Naive thymus-derived CD4-positive, alpha-beta T cell (primary cell): ENCODE measurements at regions of chr10 and their contacts with region 1.

Region 1: GRCh38 chr10:96395931-96396877 is 37.4 kb upstream of the OPALIN start:
- DNase-seq: peak; percentile 35 to 67 (median 56)
- ATAC-seq: peak; percentile 89
- H3K4me3 ChIP-seq: peak overlapping the region; percentile 28
- H3K4me3 Mint-ChIP-seq: peak overlapping the region in 7 of 10 donors; percentile 6 to 80 (median 66)
- H3K27ac ChIP-seq: no peak overlapping the region
- H3K27ac Mint-ChIP-seq: no peak overlapping the region
- H3K4me1 ChIP-seq: no peaks in the 10 kb centered on the region
- H3K4me1 Mint-ChIP-seq: peaks cover 0 to 5% (median 0%) of the 10 kb centered on the region in 7 donors
- H3K27me3 ChIP-seq: no peaks in the 10 kb centered on the region
- H3K27me3 Mint-ChIP-seq: peaks cover 7 to 52% (median 16%) of the 10 kb centered on the region in 5 donors

Region 2: DNA sequence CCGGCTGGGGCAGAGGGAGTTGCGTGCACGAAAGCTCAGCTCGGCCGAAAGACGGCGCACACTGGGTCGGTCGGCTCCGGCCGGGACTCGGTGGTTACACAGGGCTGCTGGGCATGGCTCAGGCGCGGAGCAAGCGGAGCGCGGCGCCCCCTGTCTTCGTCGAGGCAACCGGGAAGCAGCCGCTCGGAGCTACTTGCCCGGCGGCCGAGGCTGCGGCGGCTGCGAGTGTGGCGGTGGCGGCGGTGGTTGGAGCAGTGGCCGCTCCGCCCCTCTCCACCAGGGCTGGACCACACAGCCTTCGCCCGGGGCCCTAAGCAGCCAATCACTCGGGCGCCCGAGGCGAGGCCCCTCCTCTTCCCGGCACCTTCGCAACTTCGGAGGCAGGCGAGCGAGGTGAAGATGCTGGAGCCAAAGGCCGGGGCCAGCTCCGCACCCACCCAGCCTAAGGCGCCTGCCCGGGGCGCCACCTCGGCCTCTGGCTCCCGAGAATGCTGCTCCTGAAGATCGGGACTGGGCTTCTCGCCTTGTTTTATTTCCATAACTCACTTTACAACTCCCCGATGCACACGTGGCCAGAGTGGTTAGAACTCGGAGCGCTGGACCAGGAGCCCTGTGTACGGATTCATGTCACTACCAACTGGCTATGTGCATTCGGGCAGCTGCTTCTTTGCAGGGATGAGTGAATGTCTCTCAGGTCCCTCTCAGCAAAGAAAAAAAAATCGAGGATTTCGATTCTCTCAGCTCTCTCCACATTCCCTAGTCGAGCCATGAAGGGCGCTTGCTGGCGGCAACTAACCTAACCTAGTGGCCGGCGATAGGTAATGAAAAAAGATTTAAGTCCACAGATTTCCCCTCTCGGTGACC is 117.7 kb after region 1 on chr10 and contains the start of gene TLL2:
- CTCF ChIA-PET with region 1: no interaction called
- POLR2A ChIA-PET with region 1: no interaction called
- intact Hi-C with region 1: loop called (anchors 1 to 2 kb)
- DNase-seq: peak; percentile 1 to 74 (median 33)
- ATAC-seq: peak; percentile 83
- H3K4me3 ChIP-seq: peak within 1 kb of the TSS; percentile 48
- H3K4me3 Mint-ChIP-seq: peak within 1 kb of the TSS; percentile 75 to 86 (median 80)
- H3K27ac ChIP-seq: no peak within 1 kb of the TSS
- H3K27ac Mint-ChIP-seq: peak within 1 kb of the TSS in 1 of 9 donors; percentile 37
- H3K4me1 ChIP-seq: peaks cover 0 to 9% of the 10 kb centered on the region in 2 donors
- H3K4me1 Mint-ChIP-seq: peaks cover 8 to 24% (median 18%) of the 10 kb centered on the region in 7 donors
- H3K27me3 ChIP-seq: peaks cover 0 to 6% of the 10 kb centered on the region in 2 donors
- H3K27me3 Mint-ChIP-seq: peaks cover 29 to 61% (median 36%) of the 10 kb centered on the region in 5 donors
- total RNA-seq, gene TLL2: 0.24 TPM in 1 of 5 experiments, not detected in the others

Region 3: DNA sequence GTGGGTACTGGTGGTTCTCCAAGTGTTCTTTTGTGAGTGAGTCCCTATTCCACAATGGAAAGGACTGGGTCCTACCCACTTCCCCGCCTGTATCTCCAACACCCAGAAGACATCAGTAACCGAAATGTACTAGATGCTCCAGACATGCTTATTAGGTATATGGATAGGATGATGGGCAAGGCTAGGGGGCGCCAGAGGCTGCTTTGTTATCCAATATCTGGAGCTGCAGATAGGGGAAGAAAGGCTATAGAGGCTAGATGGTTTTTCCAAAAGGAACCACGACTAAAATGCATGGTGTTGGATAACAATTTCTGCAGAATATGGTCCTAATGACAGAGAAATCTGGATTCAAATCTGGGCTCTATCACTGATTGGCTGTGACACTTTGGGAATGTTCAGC is 246.8 kb after region 1 on chr10:
- CTCF ChIA-PET with region 1: no interaction called
- POLR2A ChIA-PET with region 1: no interaction called
- intact Hi-C with region 1: loop called in 1 of 2 experiments (anchors 1 kb)
- DNase-seq: peak in 2 of 9 donors; percentile 33 to 57
- ATAC-seq: peak; percentile 63
- H3K4me3 ChIP-seq: no peak overlapping the region
- H3K4me3 Mint-ChIP-seq: no peak overlapping the region
- H3K27ac ChIP-seq: no peak overlapping the region
- H3K27ac Mint-ChIP-seq: no peak overlapping the region
- H3K4me1 ChIP-seq: no peaks in the 10 kb centered on the region
- H3K4me1 Mint-ChIP-seq: peaks cover 0 to 22% (median 4%) of the 10 kb centered on the region in 7 donors
- H3K27me3 ChIP-seq: no peaks in the 10 kb centered on the region
- H3K27me3 Mint-ChIP-seq: peaks cover 0 to 8% (median 0%) of the 10 kb centered on the region in 5 donors

Region 4: DNA sequence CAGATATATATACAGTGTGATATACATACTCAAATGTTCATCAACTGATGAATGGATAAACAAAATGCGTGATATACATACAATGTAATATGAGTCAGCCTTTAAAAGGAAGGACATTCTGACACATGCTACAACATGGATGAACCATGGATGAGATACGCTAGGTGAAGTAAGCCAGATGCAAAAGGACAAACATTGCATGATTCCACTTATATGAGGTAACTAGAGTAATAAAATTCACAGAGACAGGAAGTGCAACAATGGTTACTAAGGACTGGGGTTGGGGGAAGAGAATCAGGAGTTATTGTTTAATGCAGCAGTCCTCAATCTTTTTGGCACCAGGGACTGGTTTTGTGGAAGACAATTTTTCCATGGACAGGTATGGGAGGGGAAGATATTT is 371.4 kb after region 1 on chr10:
- CTCF ChIA-PET with region 1: no interaction called
- POLR2A ChIA-PET with region 1: no interaction called
- intact Hi-C with region 1: no loop called
- DNase-seq: no peak
- ATAC-seq: no peak
- H3K4me3 ChIP-seq: no peak overlapping the region
- H3K4me3 Mint-ChIP-seq: no peak overlapping the region
- H3K27ac ChIP-seq: no peak overlapping the region
- H3K27ac Mint-ChIP-seq: peak overlapping the region in 1 of 9 donors; percentile 7
- H3K4me1 ChIP-seq: no peaks in the 10 kb centered on the region
- H3K4me1 Mint-ChIP-seq: peaks cover 0 to 7% (median 3%) of the 10 kb centered on the region in 7 donors
- H3K27me3 ChIP-seq: no peaks in the 10 kb centered on the region
- H3K27me3 Mint-ChIP-seq: peaks cover 0 to 5% (median 3%) of the 10 kb centered on the region in 5 donors

Region 5: DNA sequence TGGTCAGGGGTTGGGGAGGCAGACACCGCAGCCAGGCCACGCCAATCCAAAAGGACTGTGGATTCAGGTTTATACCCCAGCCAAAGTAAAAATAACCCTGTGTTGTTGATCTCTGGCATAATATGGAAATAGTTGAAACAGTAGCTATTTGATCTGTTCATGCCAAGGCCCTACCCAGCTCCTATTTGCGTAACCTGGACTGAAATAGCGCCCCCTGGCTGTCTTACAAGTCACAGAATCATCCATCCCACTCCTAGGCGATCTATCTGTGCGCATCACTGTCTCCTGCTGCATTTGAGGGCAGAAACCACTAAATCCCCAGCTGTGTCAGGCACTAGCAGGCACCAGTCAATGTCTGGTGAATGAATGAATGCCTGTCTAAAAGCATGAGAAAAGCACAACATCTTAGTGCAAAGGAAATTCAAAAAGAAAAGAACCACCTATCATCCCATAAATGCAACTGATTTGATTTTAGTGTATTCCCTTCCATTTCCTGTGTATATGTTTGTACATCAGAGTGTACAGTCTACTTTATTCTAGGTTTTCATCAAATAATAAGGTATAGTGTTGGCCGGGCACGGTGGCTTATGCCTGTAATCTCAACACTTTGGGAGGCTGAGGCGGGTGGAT is 629.5 kb after region 1 on chr10:
- CTCF ChIA-PET with region 1: interaction called, 3 read pairs
- POLR2A ChIA-PET with region 1: no interaction called
- intact Hi-C with region 1: loop called in 1 of 2 experiments (anchors 2 kb)
- DNase-seq: peak in 7 of 9 donors; percentile 24 to 47 (median 39)
- ATAC-seq: peak; percentile 60
- H3K4me3 ChIP-seq: no peak overlapping the region
- H3K4me3 Mint-ChIP-seq: no peak overlapping the region
- H3K27ac ChIP-seq: no peak overlapping the region
- H3K27ac Mint-ChIP-seq: no peak overlapping the region
- H3K4me1 ChIP-seq: no peaks in the 10 kb centered on the region
- H3K4me1 Mint-ChIP-seq: peaks cover 0 to 14% (median 0%) of the 10 kb centered on the region in 7 donors
- H3K27me3 ChIP-seq: no peaks in the 10 kb centered on the region
- H3K27me3 Mint-ChIP-seq: peaks cover 0 to 8% (median 0%) of the 10 kb centered on the region in 5 donors